ENCODE measurements at regions of chr11 and their contacts with region 1.

Region 1: GRCh38 chr11:73760679-73761402 is at the start of gene RAB6A:
- DNase-seq: peak; percentile 99 to 100 (median 100)
- H3K4me3 ChIP-seq: peak within 1 kb of the TSS; percentile 70 to 100 (median 96)
- H3K27ac ChIP-seq: peak within 1 kb of the TSS; percentile 87 to 100 (median 98)
- H3K27me3 ChIP-seq: no peaks in the 10 kb centered on the region
- CTCF ChIP-seq: peak in 44 of 56 donors; percentile 7 to 67 (median 45)
- total RNA-seq, gene RAB6A: 200 to 371 (median 290) TPM

Region 2: DNA sequence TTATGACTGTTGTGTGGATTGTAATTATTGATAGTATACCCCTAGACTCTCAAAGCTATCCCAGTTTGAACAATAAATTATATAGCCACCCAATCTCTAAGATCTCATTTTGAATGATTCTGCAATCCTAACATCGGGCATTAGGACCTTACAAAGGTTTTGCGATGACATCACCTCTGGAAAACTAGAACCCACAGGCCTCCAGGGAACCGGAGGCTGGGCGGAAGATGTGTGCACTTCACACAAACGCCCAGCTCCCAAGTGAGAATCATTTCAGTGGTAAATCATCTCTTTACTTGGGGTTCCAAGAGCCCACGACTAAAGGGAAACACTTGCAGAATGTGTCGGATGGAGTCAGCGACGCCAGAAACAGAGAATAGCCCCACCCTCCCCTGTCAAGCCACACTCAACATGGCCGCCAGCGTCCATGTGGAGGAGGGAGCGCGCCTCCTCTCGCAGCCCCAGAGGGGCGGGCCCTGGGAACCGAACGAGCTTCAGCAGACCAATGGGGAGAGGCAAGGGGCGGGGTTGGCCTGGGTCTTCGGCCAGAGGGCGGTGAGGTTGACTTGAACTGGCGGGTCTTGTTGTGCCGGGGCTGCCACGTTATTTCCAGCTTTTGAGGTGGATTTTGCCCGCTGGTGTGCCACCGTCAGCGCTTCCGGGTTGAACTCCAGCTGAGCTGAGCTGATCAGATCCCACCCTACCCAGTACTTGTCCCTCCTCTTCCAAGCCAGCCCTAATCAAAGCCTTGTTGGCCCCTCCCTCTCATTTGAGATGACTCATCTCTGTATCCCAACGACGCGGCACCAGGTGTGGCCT is 18.5 kb after region 1 on chr11:
- intact Hi-C with region 1: loop called (anchors 1 kb)
- DNase-seq: peak; percentile 96 to 99 (median 99)
- H3K4me3 ChIP-seq: peak overlapping the region; percentile 40 to 87 (median 70)
- H3K27ac ChIP-seq: peak overlapping the region; percentile 84 to 100 (median 97)
- H3K27me3 ChIP-seq: no peaks in the 10 kb centered on the region
- CTCF ChIP-seq: peak in 28 of 56 donors; percentile 2 to 54 (median 30)

Measured in dorsolateral prefrontal cortex (tissue), 120 donors.